Activated CD4-positive, alpha-beta T cell treated with anti-CD3 and anti-CD28 coated beads for 36 hours (primary cell): ENCODE measurements at regions of chr2 and their contacts with region 1.

Region 1: DNA sequence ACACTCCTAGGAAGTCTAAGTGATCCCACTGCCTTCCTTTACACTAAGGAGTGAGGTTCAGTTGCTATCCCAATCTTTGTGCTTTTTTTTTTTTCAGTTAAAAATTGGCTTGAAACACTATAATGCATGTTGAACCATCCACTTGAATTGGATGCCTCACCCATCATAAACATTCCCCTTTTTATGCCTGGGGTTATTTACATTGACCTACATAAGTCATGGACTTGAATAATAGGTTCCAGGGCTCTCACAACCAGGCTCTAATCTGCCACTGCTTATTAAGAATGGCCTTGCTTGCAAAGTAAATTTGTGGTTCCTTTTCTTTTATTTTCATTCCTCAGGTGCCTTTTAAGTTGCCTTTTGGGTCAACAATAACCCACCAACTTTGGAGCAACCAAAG is 236.1 kb upstream of the MEIS1 start:
- DNase-seq: no peak
- ATAC-seq: no peak
- H3K4me3 Mint-ChIP-seq: no peak overlapping the region
- H3K27ac Mint-ChIP-seq: no peak overlapping the region
- H3K4me1 Mint-ChIP-seq: no peaks in the 10 kb centered on the region
- H3K27me3 Mint-ChIP-seq: no peaks in the 10 kb centered on the region

Region 2: GRCh38 chr2:66137606-66138130 is 61.2 kb before region 1 on chr2:
- CTCF ChIA-PET with region 1: no interaction called
- POLR2A ChIA-PET with region 1: no interaction called
- intact Hi-C with region 1: no loop called
- DNase-seq: no peak
- ATAC-seq: no peak
- H3K4me3 Mint-ChIP-seq: no peak overlapping the region
- H3K27ac Mint-ChIP-seq: no peak overlapping the region
- H3K4me1 Mint-ChIP-seq: no peaks in the 10 kb centered on the region
- H3K27me3 Mint-ChIP-seq: no peaks in the 10 kb centered on the region

Region 3: GRCh38 chr2:66228128-66228547 is 29.3 kb after region 1 on chr2:
- CTCF ChIA-PET with region 1: no interaction called
- POLR2A ChIA-PET with region 1: no interaction called
- intact Hi-C with region 1: loop called in 1 of 2 experiments (anchors 1 kb)
- DNase-seq: no peak
- ATAC-seq: no peak
- H3K4me3 Mint-ChIP-seq: no peak overlapping the region
- H3K27ac Mint-ChIP-seq: no peak overlapping the region
- H3K4me1 Mint-ChIP-seq: no peaks in the 10 kb centered on the region
- H3K27me3 Mint-ChIP-seq: no peaks in the 10 kb centered on the region

Region 4: DNA sequence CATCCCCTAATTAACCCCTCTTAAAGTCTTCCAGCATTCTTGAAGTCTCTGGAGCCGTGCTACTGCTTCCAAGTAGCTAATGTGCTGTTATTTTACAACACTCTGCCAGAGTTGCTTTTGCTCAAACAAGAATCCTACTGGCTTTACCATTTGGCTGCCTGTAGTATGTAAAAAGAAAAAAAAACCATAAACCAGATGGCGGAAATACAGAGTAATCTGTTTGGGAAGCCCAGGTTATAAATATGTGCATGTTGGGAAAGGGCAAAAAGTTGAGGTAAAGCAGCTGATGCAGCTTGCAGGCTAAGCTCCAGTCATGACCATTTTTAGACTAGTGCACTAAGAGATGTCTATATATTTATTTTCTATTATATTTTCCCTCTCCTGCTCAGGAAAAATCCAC is 885.1 kb after region 1 on chr2:
- CTCF ChIA-PET with region 1: no interaction called
- POLR2A ChIA-PET with region 1: no interaction called
- intact Hi-C with region 1: no loop called
- DNase-seq: no peak
- ATAC-seq: no peak
- H3K4me3 Mint-ChIP-seq: no peak overlapping the region
- H3K27ac Mint-ChIP-seq: no peak overlapping the region
- H3K4me1 Mint-ChIP-seq: no peaks in the 10 kb centered on the region
- H3K27me3 Mint-ChIP-seq: no peaks in the 10 kb centered on the region